PC-9 (cell line): ENCODE measurements at regions of chr14 and their contacts with region 1.

Region 1: GRCh38 chr14:77862154-77862786 is 62.4 kb downstream of the ADCK1 start:
- DNase-seq: peak; percentile 58 to 86
- H3K4me3 ChIP-seq: no peak overlapping the region
- H3K27ac ChIP-seq: no peak overlapping the region
- H3K4me1 ChIP-seq: no peaks in the 10 kb centered on the region
- H3K27me3 ChIP-seq: no peaks in the 10 kb centered on the region
- CTCF ChIP-seq: peak; percentile 100

Region 2: GRCh38 chr14:78566026-78566858 is 704.0 kb after region 1 on chr14:
- CTCF ChIA-PET with region 1: interaction called, 3 read pairs
- POLR2A ChIA-PET with region 1: no interaction called
- intact Hi-C with region 1: loop called (anchors 2 kb)
- DNase-seq: peak in 1 of 2 experiments; percentile 44
- H3K4me3 ChIP-seq: no peak overlapping the region; the same call in 1 of the 2 replicates
- H3K27ac ChIP-seq: no peak overlapping the region
- H3K4me1 ChIP-seq: no peaks in the 10 kb centered on the region
- H3K27me3 ChIP-seq: no peaks in the 10 kb centered on the region
- CTCF ChIP-seq: peak; percentile 67

Region 3: DNA sequence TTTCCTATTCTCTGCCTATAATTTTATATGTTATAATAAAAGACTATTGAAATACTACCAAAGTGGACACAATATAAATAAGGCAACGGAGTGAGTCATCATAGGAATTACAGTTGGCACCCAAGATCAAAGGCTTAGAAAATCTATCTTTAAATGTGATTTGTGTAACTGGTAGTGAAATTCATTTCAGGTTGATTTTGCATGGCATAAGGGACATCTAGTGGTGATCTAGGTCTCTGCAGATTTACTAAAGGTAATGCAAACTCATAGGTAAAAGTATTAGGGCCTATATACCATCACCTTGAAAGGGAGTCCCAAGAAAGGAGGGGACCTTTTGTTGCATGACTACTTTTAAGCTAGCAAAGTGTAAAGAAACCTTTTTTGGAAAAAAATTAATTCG is 835.1 kb after region 1 on chr14:
- CTCF ChIA-PET with region 1: no interaction called
- POLR2A ChIA-PET with region 1: no interaction called
- intact Hi-C with region 1: loop called (anchors 2 kb)
- DNase-seq: no peak
- H3K4me3 ChIP-seq: no peak overlapping the region
- H3K27ac ChIP-seq: no peak overlapping the region
- H3K4me1 ChIP-seq: no peaks in the 10 kb centered on the region
- H3K27me3 ChIP-seq: 0 out of 2 replicates have a peak, but pooled peaks cover 3% of the 10 kb centered on the region
- CTCF ChIP-seq: peak; percentile 65